ENCODE measurements at regions of chr7 and their contacts with region 1.

Region 1: GRCh38 chr7:46352004-46352954 is 431.2 kb upstream of the IGFBP3 start:
- DNase-seq: peak in 17 of 42 donors; percentile 9 to 52 (median 24)

Region 2: GRCh38 chr7:45923290-45923689 is 429.0 kb before region 1 on chr7:
- intact Hi-C with region 1: loop called (anchors 10 kb)
- DNase-seq: peak; percentile 44 to 87 (median 73)

Region 3: DNA sequence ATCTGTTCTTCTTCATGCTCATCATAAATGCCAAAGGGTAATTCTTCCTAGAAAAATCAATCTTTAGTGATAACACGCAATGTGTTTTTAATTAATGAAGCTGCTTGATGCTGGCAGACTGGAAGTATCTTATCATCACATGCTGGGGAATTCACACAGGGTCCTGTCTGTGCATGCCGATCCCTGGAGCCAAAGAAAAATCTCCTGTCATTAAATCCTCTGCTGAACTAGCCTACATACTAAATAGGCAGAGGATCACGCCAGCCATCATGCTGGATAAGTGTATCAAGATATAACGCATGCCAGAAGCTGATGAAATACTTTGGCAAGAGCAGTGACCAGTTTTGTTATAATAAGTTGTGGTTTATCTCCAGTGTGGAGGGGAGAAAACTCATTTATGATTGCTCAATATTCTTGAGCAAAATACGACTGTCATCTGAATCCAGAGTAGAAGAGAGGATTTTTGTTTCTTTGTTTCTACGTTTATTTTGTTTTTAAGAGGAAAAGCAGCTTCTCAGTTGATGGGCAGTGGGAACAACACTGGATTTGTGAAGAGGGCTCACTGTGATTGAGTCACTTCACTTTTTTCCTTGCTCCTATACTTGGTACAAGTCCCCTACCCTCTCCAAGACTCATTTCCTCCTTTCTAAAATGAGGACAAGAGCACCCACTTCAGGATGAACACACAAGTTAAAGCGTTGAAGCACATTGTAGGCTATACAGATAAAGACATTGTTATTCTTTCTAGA is 580.6 kb after region 1 on chr7:
- intact Hi-C with region 1: no loop called
- DNase-seq: no peak